Activated naive CD4-positive, alpha-beta T cell treated with anti-CD3 and anti-CD28 coated beads for 36 hours (primary cell): ENCODE measurements at regions of chr20 and their contacts with region 1.

Region 1: DNA sequence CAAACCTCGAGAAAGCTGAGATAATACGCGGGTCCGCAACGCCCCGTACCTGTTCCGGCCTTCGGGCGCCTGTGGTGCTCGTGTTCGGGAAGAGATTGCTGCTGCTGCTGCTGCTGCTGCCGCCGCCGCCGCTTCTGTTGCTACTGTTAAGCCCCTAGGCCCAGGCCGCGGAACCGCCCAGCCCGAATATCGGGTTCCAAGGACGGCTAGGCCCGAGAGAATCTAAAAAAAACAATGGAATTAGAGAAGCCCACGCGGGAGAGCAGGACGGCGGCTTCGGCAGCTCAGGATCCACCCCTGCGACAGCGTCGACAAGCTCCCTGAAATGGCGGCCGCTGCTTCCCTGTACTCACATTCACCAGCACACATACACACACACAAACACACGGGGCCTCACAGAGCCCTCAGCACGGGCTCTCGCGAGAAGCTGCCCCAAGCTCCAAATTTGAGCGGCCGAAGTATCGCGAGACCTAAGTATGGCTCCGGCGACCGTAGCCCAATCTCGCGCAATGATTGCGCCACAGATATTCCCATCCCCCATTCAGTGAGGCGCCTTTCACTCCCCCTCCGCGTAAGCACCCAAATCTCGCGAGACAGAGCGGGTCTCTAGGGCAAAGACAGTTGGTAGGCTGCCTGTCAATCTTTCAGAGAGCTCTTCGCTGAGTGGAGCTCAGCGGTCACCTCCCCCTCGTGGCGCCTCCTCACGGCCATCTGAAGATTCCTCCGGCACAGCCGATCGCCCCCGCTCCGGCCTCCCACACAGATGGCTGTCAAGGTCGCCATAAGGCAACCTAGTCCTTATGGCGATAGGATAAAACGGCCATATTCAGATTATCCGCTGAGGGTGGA is at the start of gene RBM39:
- DNase-seq: peak; percentile 100
- H3K4me3 Mint-ChIP-seq: peak within 1 kb of the TSS; percentile 99
- H3K27ac Mint-ChIP-seq: peak within 1 kb of the TSS; percentile 100
- H3K4me1 Mint-ChIP-seq: peaks cover 38% of the 10 kb centered on the region
- H3K27me3 Mint-ChIP-seq: no peaks in the 10 kb centered on the region
- total RNA-seq, gene RBM39: 297 to 304 TPM

Region 2: GRCh38 chr20:35092524-35093266 is 649.4 kb before region 1 on chr20 and contains the start of gene TRPC4AP:
- CTCF ChIA-PET with region 1: no interaction called
- intact Hi-C with region 1: loop called (anchors 1 kb)
- DNase-seq: peak; percentile 90
- H3K4me3 Mint-ChIP-seq: peak within 1 kb of the TSS; percentile 89
- H3K27ac Mint-ChIP-seq: peak within 1 kb of the TSS; percentile 100
- H3K4me1 Mint-ChIP-seq: peaks cover 59% of the 10 kb centered on the region
- H3K27me3 Mint-ChIP-seq: no peaks in the 10 kb centered on the region
- total RNA-seq, gene TRPC4AP: 49.6 to 51.7 TPM

Region 3: GRCh38 chr20:35541783-35542588 is 200.1 kb before region 1 on chr20 and contains the start of gene ERGIC3:
- CTCF ChIA-PET with region 1: interaction called, 3 read pairs
- intact Hi-C with region 1: loop called (anchors 1 kb)
- DNase-seq: peak; percentile 98
- H3K4me3 Mint-ChIP-seq: peak within 1 kb of the TSS; percentile 86
- H3K27ac Mint-ChIP-seq: peak within 1 kb of the TSS; percentile 80
- H3K4me1 Mint-ChIP-seq: peaks cover 19% of the 10 kb centered on the region
- H3K27me3 Mint-ChIP-seq: no peaks in the 10 kb centered on the region
- total RNA-seq, gene ERGIC3: 107 to 113 TPM

Region 4: DNA sequence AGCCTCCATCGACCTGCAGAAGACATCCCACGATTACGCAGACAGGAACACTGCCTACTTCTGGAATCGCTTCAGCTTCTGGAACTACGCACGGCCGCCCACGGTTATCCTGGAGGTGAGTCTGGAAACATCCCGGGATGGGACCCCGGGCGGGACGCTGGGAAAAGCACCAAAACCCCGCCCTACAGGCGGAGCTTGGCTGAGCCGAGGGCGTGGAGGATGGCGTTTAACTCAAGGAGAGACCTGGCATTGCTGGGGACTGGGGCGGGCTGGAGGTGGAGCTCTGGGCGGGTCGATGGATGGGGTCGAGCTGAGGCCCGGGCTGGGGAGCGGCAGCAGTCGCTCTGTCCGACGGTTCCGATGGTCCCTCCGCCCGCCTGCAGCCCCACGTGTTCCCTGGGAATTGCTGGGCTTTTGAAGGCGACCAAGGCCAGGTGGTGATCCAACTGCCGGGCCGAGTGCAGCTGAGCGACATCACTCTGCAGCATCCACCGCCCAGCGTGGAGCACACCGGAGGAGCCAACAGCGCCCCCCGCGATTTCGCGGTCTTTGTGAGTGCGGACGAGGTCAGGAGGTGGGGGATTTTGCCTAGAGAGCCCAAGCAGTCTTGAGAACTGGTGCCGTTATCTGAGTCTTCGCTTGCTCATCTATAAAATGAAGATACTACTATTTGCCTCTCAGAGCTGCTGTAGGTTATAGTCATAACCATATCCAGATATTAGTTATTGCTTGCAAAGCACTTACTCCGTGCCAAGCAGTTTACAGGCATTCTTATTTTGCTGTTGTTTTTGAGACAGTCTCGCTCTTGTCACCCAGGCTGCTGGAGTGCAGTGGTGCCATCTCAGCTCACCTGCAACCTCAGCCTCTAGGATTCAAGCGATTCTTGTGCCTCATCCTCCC is 122.7 kb before region 1 on chr20:
- CTCF ChIA-PET with region 1: interaction called, 6 read pairs
- intact Hi-C with region 1: loop called (anchors 1 kb)
- DNase-seq: peak; percentile 88
- H3K4me3 Mint-ChIP-seq: peak overlapping the region; percentile 82
- H3K27ac Mint-ChIP-seq: peak overlapping the region; percentile 70
- H3K4me1 Mint-ChIP-seq: peaks cover 47% of the 10 kb centered on the region
- H3K27me3 Mint-ChIP-seq: peaks cover 4% of the 10 kb centered on the region

Region 5: DNA sequence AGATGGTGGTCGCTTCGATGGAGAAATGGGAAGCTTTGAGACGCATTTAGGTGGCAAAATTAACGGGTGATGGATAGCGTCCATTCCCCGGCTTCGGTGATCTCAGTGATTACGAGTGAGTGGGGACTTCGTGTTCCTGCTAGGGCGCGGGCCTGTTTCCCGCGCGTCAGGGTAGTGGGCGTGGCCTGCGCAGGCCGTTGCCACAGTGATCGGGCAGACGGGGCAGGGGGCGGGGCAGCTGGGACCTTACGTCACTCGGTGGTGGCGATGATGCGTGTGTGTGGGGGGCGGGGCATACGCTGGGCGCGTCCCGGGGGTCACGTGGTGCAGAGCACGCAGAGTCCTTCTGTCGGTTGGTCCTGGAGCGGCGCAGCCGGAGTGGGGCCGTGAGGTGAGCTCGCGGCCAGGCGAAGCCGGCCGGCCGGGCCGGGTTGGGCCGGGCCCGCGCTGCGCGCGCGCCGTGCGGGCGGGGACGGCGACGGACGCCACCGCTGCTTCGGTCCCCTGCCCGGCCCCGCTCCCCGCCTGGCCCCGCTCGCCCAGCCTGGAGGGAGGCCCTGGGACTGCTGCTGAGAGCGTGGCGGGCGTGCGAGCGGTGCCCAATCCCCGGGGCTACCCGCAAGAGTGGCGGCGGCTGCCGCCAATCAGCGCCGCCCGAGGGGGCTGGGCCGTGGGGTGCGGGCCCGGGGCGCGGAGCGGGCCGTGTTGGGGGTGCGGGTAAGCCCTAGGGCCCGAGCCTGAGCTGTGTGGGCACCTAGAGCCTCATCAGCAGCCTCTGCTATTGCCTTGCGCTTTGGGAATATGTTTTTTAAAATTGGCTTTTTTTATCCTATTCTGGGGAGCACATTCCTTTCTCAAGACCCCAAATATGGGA is 29.8 kb after region 1 on chr20 and contains the start of gene PHF20:
- CTCF ChIA-PET with region 1: interaction called, 16 read pairs
- intact Hi-C with region 1: loop called (anchors 1 kb)
- DNase-seq: peak; percentile 100
- H3K4me3 Mint-ChIP-seq: peak within 1 kb of the TSS; percentile 80
- H3K27ac Mint-ChIP-seq: peak within 1 kb of the TSS; percentile 82
- H3K4me1 Mint-ChIP-seq: peaks cover 74% of the 10 kb centered on the region
- H3K27me3 Mint-ChIP-seq: no peaks in the 10 kb centered on the region
- total RNA-seq, gene PHF20: 39.8 to 46.0 TPM

Region 6: GRCh38 chr20:35883778-35884540 is 141.8 kb after region 1 on chr20:
- CTCF ChIA-PET with region 1: interaction called, 4 read pairs
- intact Hi-C with region 1: loop called (anchors 1 kb)
- DNase-seq: peak; percentile 82
- H3K4me3 Mint-ChIP-seq: no peak overlapping the region
- H3K27ac Mint-ChIP-seq: no peak overlapping the region
- H3K4me1 Mint-ChIP-seq: peaks cover 10% of the 10 kb centered on the region
- H3K27me3 Mint-ChIP-seq: no peaks in the 10 kb centered on the region

Region 7: DNA sequence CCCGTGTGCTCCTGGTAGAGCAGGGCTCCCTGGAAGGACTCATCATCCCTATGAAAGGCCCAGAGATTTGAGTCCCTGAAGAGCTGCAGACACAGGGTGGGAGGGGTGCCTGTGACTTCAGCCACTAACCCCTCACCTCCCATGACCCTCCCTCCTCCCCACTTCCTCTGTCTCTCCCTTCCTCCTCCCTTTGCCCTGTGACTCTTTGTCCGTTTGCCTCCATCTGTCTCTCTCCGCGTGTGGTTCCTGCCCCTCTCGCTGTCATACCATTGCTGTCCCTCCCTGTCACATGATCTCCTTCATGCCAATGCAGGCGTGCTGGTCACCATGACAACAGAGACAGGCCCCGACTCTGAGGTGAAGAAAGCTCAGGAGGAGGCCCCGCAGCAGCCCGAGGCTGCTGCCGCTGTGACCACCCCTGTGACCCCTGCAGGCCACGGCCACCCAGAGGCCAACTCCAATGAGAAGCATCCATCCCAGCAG is 431.4 kb after region 1 on chr20:
- CTCF ChIA-PET with region 1: no interaction called
- intact Hi-C with region 1: no loop called
- DNase-seq: no peak
- H3K4me3 Mint-ChIP-seq: no peak overlapping the region
- H3K27ac Mint-ChIP-seq: no peak overlapping the region
- H3K4me1 Mint-ChIP-seq: peaks cover 3% of the 10 kb centered on the region
- H3K27me3 Mint-ChIP-seq: no peaks in the 10 kb centered on the region

Region 8: DNA sequence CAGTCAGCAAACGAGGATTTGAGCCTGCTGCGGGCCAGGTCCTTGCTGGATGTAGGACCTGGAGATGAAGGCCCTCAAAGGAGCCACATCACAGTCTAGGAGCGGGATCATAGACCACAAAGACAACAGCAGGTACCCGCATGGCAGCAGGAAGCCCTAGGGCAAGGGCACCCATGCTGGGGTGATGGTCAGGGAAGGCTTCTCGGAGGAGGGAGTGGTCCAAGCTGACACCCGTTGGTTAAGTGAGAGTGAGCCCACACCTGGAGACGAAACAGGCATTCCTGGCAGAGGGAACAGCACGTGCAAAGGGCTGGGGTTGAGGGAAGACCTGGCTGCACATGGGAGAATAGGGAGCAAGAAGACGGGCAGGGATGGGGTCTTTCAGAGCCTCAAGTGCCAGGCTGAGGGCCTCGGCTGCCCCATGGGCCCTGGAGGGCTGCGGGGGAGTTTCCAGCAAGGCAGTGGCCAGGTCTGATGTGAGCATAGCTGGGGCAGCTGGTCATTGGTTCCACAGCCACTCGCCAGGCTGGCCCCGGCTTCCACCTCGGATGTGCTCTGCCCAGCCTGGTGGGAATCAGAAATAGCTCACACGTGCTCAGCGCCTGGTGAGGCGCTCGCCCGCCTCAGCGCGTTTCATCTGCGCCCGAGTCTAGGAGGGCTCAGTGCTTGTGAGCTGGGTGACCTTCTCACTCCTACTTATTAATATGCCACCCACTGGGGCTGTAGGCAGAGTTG is 579.0 kb after region 1 on chr20:
- CTCF ChIA-PET with region 1: no interaction called
- intact Hi-C with region 1: no loop called
- DNase-seq: no peak
- H3K4me3 Mint-ChIP-seq: no peak overlapping the region
- H3K27ac Mint-ChIP-seq: no peak overlapping the region
- H3K4me1 Mint-ChIP-seq: no peaks in the 10 kb centered on the region
- H3K27me3 Mint-ChIP-seq: peaks cover 5% of the 10 kb centered on the region